ENCODE measurements at regions of chr17 and their contacts with region 1.

Region 1: GRCh38 chr17:35089586-35090296 is 26.2 kb upstream of the RFFL start:
- DNase-seq: peak in 1 of 3 donors; percentile 49
- ATAC-seq: peak; percentile 2 to 15 (median 12)
- H3K4me3 ChIP-seq: peak overlapping the region; percentile 87 to 97 (median 89)
- H3K27ac ChIP-seq: peak overlapping the region; percentile 31 to 53 (median 33)
- H3K4me1 ChIP-seq: peaks cover 0 to 19% (median 5%) of the 10 kb centered on the region in 4 donors
- H3K27me3 ChIP-seq: no peaks in the 10 kb centered on the region
- CTCF ChIP-seq: no peak
- POLR2A ChIP-seq: no peak

Region 2: DNA sequence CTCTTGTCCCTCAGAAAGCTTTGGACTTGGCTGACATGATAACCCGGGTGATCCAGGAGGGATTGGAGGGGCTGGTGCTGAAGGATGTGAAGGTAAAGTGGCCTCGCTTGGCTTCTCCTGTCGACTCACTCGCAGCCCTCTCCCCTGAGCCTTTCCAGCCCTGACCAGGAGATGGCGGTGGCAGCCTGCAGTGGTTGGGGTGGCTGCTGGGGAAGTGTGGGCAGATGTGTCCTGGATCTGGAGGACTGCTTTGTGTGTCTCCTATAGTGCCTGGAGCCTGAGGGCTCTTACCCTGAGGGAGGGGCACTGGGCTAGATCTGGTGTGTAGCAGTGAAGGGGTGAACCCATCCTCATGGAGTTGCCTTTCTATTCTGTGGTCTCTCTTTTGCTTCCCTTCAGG is 91.5 kb before region 1 on chr17:
- intact Hi-C with region 1: loop called in 1 of 2 experiments (anchors 10 kb)
- DNase-seq: peak; percentile 76 to 83 (median 78)
- ATAC-seq: peak; percentile 93 to 97 (median 94)
- H3K4me3 ChIP-seq: no peak overlapping the region
- H3K27ac ChIP-seq: no peak overlapping the region
- H3K4me1 ChIP-seq: no peaks in the 10 kb centered on the region
- H3K27me3 ChIP-seq: no peaks in the 10 kb centered on the region
- CTCF ChIP-seq: peak; percentile 81 to 90 (median 86)
- POLR2A ChIP-seq: no peak

Measured in right lobe of liver (tissue), 6 donors.